ENCODE measurements at regions of chr14 and their contacts with region 1.

Region 1: DNA sequence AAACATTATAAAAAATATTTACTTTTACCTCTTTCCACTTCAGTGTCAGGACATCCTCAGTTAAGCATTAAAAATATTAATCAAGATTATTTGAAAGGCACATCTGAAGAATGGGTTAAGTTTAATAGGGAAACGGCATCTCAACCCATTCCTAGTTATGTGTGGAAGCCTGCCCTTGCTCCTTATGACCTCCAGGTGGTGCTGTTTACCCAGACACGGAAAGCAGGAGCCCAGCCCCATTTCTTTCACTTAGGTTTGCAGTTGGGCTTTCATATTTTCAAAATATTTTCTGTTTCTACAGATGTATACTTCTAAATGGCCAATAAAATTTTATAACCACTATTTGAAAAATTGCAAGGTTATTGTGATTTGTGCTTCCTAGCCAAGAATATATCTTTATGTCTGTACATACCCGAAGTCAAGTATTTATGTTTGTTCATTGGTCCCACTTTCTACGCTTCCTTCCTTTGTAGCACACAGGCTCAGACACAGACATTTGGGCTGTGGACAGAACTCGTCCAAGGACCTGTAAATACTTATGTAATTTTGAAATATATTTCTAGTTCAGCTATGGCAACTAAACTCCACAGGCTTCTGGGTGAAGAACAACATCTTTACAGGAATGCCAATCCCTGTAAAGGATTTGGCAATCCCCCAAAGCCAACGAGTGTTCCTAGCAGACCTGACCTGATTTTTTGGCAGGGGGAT is 247.1 kb downstream of the AKAP6 start:
- DNase-seq: peak in 2 of 5 donors; percentile 35 to 38
- ATAC-seq: peak; percentile 57 to 81 (median 78)
- H3K4me3 ChIP-seq: peak overlapping the region in 6 of 12 donors; percentile 2 to 43 (median 24)
- H3K27ac ChIP-seq: peak overlapping the region in 3 of 12 donors; percentile 2 to 23 (median 11)
- H3K4me1 ChIP-seq: peaks cover 0 to 43% (median 14%) of the 10 kb centered on the region in 12 donors
- H3K27me3 ChIP-seq: no peaks in the 10 kb centered on the region
- CTCF ChIP-seq: peak; percentile 90 to 98 (median 95)
- POLR2A ChIP-seq: no peak

Region 2: DNA sequence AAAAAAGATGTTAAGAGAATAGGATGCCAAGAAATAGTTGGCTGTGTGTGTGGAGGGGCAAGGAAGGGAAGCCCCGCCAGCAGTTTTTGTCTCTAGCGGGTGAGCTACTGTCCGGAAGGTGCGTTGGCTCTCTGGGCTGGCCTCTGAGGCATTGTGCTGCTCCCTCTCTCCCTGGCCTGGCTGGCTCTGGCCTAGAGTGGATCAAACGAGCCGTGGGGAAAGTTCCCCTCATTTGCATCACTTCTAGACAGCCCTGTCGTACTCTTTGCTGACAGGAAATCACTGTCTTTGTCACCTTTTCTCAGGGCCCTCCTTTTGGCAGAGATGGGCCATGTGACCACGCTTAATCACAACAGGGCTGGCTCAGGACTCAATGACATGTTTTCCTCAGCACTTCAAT is 126.3 kb after region 1 on chr14:
- intact Hi-C with region 1: loop called in 3 of 10 experiments (anchors 5 to 10 kb)
- DNase-seq: peak; percentile 42 to 73 (median 50)
- ATAC-seq: peak; percentile 79 to 93 (median 90)
- H3K4me3 ChIP-seq: peak overlapping the region in 2 of 12 donors; percentile 10 to 27
- H3K27ac ChIP-seq: peak overlapping the region; percentile 30 to 95 (median 72)
- H3K4me1 ChIP-seq: peaks cover 0 to 35% (median 28%) of the 10 kb centered on the region in 12 donors
- H3K27me3 ChIP-seq: no peaks in the 10 kb centered on the region
- CTCF ChIP-seq: no peak
- POLR2A ChIP-seq: peak in 1 of 2 donors; percentile 26

Region 3: DNA sequence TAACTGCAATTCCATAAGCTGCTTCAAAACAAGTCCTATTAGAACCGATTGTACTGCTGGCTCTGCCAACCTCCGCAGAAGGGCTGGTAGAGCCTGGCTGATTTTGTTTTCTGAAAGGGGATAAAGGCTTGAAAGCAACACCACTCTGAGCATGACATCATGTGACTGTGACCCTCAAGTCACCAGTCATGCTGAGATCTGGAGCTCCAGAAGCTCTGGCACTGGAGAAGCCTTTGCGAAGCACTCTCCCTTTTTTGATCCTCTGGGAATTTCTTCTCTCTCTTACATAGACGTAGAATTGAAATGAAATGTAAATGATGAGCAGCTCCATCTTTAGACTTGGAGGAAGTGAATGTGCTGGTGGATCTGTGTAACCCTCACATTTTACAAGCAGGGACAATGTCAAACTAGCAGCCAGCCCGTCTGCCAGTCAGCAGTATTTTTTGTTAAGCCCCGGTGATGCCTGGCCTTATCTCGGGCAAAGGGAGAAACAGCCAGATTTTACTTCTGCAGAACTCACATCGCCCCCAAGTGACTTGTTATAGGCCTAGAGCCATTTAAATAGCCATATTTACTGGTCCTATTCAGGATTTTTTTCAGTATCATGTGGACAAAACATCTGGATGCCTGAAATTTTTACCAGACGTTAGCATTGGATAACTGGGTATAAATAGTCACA is 250.3 kb after region 1 on chr14:
- intact Hi-C with region 1: loop called in 4 of 10 experiments (anchors 5 to 10 kb)
- DNase-seq: peak in 3 of 5 donors; percentile 27 to 38 (median 30)
- ATAC-seq: peak; percentile 38 to 74 (median 65)
- H3K4me3 ChIP-seq: peak overlapping the region in 1 of 12 donors; percentile 13
- H3K27ac ChIP-seq: peak overlapping the region in 8 of 12 donors; percentile 13 to 65 (median 26)
- H3K4me1 ChIP-seq: peaks cover 0 to 58% (median 20%) of the 10 kb centered on the region in 12 donors
- H3K27me3 ChIP-seq: no peaks in the 10 kb centered on the region
- CTCF ChIP-seq: peak in 6 of 12 donors; percentile 12 to 43 (median 24)
- POLR2A ChIP-seq: no peak

Region 4: GRCh38 chr14:32998433-32998832 is 422.2 kb after region 1 on chr14:
- intact Hi-C with region 1: loop called in 6 of 10 experiments (anchors 2 to 10 kb)
- DNase-seq: no peak
- ATAC-seq: no peak
- H3K4me3 ChIP-seq: no peak overlapping the region
- H3K27ac ChIP-seq: no peak overlapping the region
- H3K4me1 ChIP-seq: no peaks in the 10 kb centered on the region
- H3K27me3 ChIP-seq: no peaks in the 10 kb centered on the region
- CTCF ChIP-seq: peak in 11 of 12 donors; percentile 8 to 60 (median 44)
- POLR2A ChIP-seq: no peak

Region 5: GRCh38 chr14:33792720-33793368 is 1216.6 kb after region 1 on chr14:
- intact Hi-C with region 1: loop called (anchors 1 to 5 kb)
- DNase-seq: peak; percentile 73 to 87 (median 79)
- ATAC-seq: peak; percentile 72 to 94 (median 87)
- H3K4me3 ChIP-seq: peak overlapping the region in 9 of 12 donors; percentile 15 to 49 (median 30)
- H3K27ac ChIP-seq: peak overlapping the region in 1 of 12 donors; percentile 32
- H3K4me1 ChIP-seq: peaks cover 0 to 13% (median 2%) of the 10 kb centered on the region in 12 donors
- H3K27me3 ChIP-seq: no peaks in the 10 kb centered on the region
- CTCF ChIP-seq: peak; percentile 91 to 98 (median 96)
- POLR2A ChIP-seq: no peak

Region 6: DNA sequence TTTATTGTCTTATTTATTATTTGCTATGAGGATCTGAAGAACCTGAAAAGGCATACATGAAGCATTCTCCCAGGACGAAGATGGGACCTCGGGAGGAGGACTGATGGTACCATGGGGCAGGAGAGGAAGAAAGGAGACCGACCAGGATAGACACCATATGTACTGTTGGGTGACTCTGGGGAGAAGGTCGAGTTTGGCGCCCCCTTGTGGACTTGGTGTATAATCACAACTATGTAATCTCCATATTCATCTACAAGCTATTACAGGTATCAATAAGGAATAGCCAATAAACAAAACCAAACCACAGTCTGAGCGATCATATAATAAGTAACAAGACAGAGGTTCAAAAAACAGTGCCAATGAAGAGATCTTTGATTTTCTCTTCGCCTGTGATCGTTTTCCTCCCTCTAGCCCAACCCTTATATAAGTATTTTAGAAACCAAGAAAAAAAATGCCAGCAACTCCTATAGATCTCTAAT is 1746.7 kb after region 1 on chr14:
- intact Hi-C with region 1: loop called in 4 of 10 experiments (anchors 5 to 10 kb)
- DNase-seq: peak; percentile 33 to 69 (median 49)
- ATAC-seq: peak in 3 of 4 donors; percentile 68 to 73 (median 72)
- H3K4me3 ChIP-seq: no peak overlapping the region
- H3K27ac ChIP-seq: no peak overlapping the region
- H3K4me1 ChIP-seq: peaks cover 0 to 3% (median 0%) of the 10 kb centered on the region in 12 donors
- H3K27me3 ChIP-seq: no peaks in the 10 kb centered on the region
- CTCF ChIP-seq: peak; percentile 54 to 80 (median 72)
- POLR2A ChIP-seq: no peak

Measured in heart left ventricle (tissue), 16 donors.